ENCODE measurements at regions of chr9 and their contacts with region 1.

Region 1: GRCh38 chr9:109520478-109521132 is 22.5 kb upstream of the PTPN3 start:
- DNase-seq: peak in 1 of 3 donors; percentile 69
- ATAC-seq: peak; percentile 77 to 84 (median 80)
- H3K4me3 ChIP-seq: no peak overlapping the region
- H3K27ac ChIP-seq: no peak overlapping the region
- H3K4me1 ChIP-seq: peaks cover 0 to 16% (median 7%) of the 10 kb centered on the region in 4 donors
- H3K27me3 ChIP-seq: no peaks in the 10 kb centered on the region
- CTCF ChIP-seq: peak; percentile 87 to 94 (median 90)
- POLR2A ChIP-seq: no peak

Region 2: DNA sequence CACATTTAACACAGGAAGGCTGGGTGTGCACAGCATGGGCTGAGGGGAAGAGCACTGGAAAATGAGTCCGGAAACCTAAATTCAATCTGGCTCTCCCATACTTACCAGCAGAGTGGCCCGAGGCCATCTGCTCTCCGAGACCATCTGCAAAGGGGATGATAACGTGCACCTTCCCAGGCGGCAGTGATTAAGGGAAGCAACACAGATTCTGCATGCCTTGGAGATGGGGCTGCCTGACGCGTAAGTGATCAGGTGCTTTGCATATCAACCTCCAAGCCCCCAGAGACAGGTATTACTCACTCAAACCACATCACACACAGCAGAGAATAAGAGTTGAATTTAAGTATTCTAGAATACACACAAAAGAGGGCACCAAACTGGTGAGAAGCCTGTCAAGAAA is 208.9 kb before region 1 on chr9:
- intact Hi-C with region 1: no loop called
- DNase-seq: no peak
- ATAC-seq: no peak
- H3K4me3 ChIP-seq: no peak overlapping the region
- H3K27ac ChIP-seq: no peak overlapping the region
- H3K4me1 ChIP-seq: peaks cover 0 to 56% (median 17%) of the 10 kb centered on the region in 4 donors
- H3K27me3 ChIP-seq: no peaks in the 10 kb centered on the region
- CTCF ChIP-seq: no peak
- POLR2A ChIP-seq: no peak

Region 3: GRCh38 chr9:109453210-109453842 is 67.3 kb before region 1 on chr9:
- intact Hi-C with region 1: loop called in 1 of 2 experiments (anchors 10 kb)
- DNase-seq: no peak
- ATAC-seq: peak in 2 of 4 donors; percentile 31 to 58
- H3K4me3 ChIP-seq: no peak overlapping the region
- H3K27ac ChIP-seq: no peak overlapping the region
- H3K4me1 ChIP-seq: no peaks in the 10 kb centered on the region
- H3K27me3 ChIP-seq: no peaks in the 10 kb centered on the region
- CTCF ChIP-seq: no peak
- POLR2A ChIP-seq: no peak

Region 4: DNA sequence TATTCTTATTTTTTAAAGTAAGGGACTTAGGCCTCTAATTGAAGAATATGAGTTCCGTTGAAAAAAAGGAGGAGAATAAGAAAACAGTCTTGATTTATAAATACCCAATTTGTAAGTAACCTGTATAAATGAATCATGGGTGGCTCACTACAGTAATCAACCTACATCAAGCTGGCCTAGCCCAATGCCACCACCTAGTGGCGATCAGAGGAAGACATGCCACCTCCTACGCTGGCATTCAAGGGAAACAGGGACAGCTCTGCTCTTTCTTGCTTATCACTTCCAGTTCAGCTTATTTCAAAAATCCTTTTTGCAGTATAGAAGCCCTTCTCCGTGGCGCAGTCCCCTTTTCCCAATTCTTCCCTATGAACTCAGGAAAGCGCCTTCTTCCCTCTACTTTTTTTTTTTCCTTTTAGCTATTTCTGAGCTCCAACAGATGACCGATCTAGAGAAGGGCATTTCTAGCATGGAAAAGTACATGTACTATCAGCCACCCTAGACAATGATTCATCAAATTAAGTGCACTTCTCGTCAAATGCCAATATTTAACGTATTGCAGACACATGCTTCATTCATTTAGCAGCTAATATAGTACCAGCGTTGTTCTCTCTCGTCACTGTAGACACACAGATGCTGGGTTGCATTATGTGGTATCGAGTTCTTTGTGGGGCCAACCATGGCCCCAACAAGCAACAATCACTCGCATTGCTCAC is 50.8 kb before region 1 on chr9:
- intact Hi-C with region 1: loop called in 1 of 2 experiments (anchors 10 kb)
- DNase-seq: peak; percentile 55 to 77 (median 76)
- ATAC-seq: peak; percentile 92 to 97 (median 97)
- H3K4me3 ChIP-seq: no peak overlapping the region
- H3K27ac ChIP-seq: peak overlapping the region in 1 of 3 donors; percentile 57
- H3K4me1 ChIP-seq: peaks cover 0 to 35% (median 10%) of the 10 kb centered on the region in 4 donors
- H3K27me3 ChIP-seq: no peaks in the 10 kb centered on the region
- CTCF ChIP-seq: peak; percentile 78 to 97 (median 92)
- POLR2A ChIP-seq: no peak